ENCODE measurements at regions of chr10 and their contacts with region 1.

Region 1: GRCh38 chr10:62038609-62039190 is 137.2 kb downstream of the ARID5B start:
- DNase-seq: peak; percentile 90
- H3K4me3 Mint-ChIP-seq: peak overlapping the region; percentile 14
- H3K27ac Mint-ChIP-seq: peak overlapping the region; percentile 91
- H3K4me1 Mint-ChIP-seq: peaks cover 85% of the 10 kb centered on the region
- H3K27me3 Mint-ChIP-seq: no peaks in the 10 kb centered on the region

Region 2: DNA sequence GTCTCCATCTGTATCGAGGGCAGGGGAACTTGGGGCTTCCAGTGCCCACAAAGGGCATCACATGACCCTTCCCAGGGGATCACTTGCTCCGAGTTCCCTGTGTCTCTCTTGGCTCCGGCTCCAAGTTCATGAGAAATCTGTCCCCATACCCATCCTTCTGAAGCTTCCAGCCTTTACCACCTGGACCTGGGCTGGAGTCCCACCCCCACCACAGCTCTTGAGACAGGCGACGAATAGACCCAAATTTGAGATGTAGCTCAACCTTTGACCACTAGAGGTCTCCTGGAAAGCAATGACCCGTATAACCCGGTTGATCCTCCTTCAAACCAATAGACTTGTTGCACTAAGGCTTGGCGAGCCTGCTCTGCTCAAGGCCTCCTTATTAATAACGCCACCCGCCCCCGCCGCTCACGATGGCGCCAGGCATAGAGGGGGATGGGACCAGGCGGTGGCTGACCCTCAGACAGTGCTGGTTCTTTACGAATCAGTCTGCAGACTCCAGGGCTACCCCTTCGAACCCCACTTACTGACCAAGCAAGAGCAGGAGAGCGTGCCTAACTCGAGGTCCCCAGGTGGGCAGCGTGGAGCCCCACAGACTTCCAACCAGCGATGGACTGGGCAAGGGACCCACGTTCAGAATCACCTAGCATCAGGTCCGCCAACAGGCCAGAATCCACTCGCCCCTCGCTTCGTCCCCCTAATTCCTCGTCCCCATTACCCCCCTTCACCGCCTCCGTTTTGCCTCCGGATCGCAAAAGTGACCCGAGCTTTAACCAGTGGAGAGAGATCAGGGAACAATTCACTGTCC is 141.6 kb before region 1 on chr10:
- CTCF ChIA-PET with region 1: interaction called, 5 read pairs
- intact Hi-C with region 1: loop called (anchors 1 kb)
- DNase-seq: peak; percentile 78
- H3K4me3 Mint-ChIP-seq: peak overlapping the region; percentile 77
- H3K27ac Mint-ChIP-seq: peak overlapping the region; percentile 90
- H3K4me1 Mint-ChIP-seq: peaks cover 40% of the 10 kb centered on the region
- H3K27me3 Mint-ChIP-seq: no peaks in the 10 kb centered on the region

Region 3: DNA sequence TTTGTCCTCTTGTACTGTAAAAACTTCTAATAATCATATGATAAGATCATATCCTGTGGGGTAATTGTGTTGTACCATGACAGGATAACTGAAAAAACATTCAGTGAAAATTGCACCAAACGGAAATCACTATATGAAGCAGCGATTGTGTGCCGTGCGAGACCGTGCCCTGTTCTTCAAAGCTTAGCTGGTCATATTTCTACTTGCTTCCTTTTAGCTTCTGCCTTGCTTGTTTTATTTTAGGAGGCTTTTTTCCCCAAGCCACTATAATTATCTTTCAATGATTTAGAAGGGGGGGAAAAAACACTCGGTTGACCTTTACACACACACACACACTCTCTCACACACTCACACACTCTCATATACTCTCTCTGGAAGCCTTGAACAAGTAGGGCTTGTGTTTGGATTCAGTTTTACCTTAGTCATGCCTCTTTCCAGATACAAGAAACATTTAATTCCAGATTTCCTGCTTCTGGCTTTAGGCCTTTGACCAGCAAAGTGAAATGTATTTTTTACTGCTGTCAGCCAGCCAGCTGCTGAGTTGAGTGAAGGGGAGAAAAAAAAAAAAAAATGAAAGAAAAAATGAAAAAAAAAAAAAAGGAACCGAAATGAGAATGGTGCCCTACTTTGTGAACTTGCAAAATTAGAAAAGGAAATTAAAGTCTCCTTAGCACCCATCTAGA is 44.2 kb after region 1 on chr10:
- CTCF ChIA-PET with region 1: interaction called, 7 read pairs
- intact Hi-C with region 1: loop called (anchors 2 kb)
- DNase-seq: peak; percentile 80
- H3K4me3 Mint-ChIP-seq: peak overlapping the region; percentile 41
- H3K27ac Mint-ChIP-seq: peak overlapping the region; percentile 89
- H3K4me1 Mint-ChIP-seq: peaks cover 86% of the 10 kb centered on the region
- H3K27me3 Mint-ChIP-seq: no peaks in the 10 kb centered on the region